ENCODE measurements at regions of chr6 and their contacts with region 1.

Region 1: DNA sequence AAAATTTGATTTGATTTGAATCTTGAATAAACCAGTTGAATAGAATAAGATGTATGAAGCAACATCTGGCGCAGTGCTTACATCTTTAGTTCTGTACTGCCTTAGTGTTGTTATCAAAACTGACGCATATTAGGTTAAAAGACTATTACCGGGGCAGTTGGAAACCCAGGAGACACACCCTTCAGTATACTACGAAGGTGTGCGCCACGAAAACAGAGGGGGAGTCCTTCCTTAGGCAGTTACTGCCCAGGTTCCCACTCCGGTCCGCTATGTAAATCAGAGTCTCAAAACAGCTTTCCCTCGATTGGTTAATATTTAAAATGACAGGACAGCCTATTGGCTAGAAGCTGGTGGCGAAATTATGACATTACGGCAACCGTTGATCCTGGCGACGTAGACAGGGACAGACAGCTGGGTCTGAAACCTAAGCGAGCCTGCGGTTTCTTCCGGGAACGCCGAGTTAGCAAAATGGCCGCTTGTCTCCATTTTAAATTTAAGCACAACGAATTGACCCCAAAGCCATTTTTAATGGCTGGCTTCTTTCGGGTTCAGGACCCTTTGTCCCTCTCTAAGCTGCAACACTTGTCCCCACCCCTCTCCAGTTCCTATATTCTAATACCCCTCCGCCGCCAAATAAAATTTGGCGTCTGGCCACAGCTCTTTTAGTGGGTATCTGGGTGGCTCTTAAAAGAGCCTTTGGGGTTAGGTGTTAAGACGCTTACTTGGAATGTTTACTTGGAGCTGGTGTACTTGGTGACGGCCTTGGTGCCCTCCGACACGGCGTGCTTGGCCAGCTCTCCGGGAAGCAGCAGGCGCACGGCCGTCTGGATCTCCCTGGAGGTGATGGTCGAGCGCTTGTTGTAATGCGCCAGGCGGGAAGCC is 35.8 kb downstream of the HFE start:
- DNase-seq: peak; percentile 93
- H3K4me3 ChIP-seq: peak overlapping the region; percentile 78
- H3K27ac ChIP-seq: peak overlapping the region; percentile 93
- H3K27me3 ChIP-seq: no peaks in the 10 kb centered on the region
- CTCF ChIP-seq: 0 out of 2 replicates have a peak, but pooled peaks have one; percentile 2

Region 2: DNA sequence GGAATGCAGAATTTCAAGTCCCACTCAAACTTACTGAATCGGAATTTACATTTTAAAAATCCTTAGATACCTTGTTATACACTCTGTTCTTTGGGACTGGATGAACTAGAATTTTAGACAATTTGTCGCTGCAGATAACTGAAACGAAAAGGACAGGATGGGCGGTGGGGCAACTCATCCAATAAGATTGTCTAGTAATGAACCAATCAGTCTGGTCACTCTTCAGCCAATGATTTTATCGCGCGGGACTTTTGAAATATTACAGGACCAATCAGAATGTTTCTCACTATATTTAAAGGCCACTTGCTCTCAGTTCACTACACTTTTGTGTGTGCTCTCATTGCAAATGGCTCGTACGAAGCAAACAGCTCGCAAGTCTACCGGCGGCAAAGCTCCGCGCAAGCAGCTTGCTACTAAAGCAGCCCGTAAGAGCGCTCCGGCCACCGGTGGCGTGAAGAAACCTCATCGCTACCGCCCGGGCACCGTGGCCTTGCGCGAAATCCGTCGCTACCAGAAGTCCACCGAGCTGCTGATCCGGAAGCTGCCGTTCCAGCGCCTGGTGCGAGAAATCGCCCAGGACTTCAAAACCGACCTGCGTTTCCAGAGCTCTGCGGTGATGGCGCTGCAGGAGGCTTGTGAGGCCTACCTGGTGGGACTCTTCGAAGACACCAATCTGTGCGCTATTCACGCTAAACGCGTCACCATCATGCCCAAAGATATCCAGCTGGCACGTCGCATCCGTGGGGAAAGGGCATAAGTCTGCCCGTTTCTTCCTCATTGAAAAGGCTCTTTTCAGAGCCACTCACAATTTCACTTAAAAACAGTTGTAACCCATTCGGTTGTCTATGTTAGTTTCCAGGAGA is 77.7 kb before region 1 on chr6:
- CTCF ChIA-PET with region 1: no interaction called
- POLR2A ChIA-PET with region 1: interaction called, 48 read pairs
- DNase-seq: peak; percentile 82
- H3K4me3 ChIP-seq: peak overlapping the region; percentile 66
- H3K27ac ChIP-seq: peak overlapping the region; percentile 63
- H3K27me3 ChIP-seq: no peaks in the 10 kb centered on the region
- CTCF ChIP-seq: peak; percentile 19; the same call in 1 of the 2 replicates

Region 3: DNA sequence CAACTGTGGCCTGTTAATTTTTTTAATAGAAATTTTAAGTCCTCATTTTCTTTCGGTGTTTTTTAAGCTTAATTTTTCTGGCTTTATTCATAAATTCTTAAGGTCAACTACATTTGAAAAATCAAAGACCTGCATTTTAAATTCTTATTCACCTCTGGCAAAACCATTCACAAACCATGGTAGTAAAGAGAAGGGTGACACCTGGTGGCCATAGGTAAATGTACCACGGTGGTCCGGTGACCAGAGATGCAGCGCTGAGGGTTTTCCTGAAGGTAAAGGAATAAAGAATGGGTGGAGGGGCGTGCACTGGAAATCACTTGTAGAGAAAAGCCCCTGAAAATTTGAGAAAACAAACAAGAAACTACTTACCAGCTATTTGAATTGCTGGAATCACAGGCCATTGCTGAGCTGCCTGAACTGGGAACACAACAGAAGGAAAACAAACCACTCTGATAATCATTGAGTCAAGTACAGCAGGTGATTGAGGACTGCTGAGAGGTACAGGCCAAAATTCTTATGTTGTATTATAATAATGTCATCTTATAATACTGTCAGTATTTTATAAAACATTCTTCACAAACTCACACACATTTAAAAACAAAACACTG is 25.7 kb before region 1 on chr6:
- CTCF ChIA-PET with region 1: interaction called, 15 read pairs
- POLR2A ChIA-PET with region 1: interaction called, 101 read pairs
- DNase-seq: no peak
- H3K4me3 ChIP-seq: no peak overlapping the region
- H3K27ac ChIP-seq: no peak overlapping the region
- H3K27me3 ChIP-seq: no peaks in the 10 kb centered on the region
- CTCF ChIP-seq: peak; percentile 69

Region 4: GRCh38 chr6:26172496-26172958 is 49.5 kb after region 1 on chr6:
- CTCF ChIA-PET with region 1: no interaction called
- POLR2A ChIA-PET with region 1: interaction called, 16 read pairs
- DNase-seq: no peak
- H3K4me3 ChIP-seq: peak overlapping the region; percentile 64
- H3K27ac ChIP-seq: peak overlapping the region; percentile 93
- H3K27me3 ChIP-seq: no peaks in the 10 kb centered on the region
- CTCF ChIP-seq: no peak

Region 5: GRCh38 chr6:26216356-26216885 is 93.4 kb after region 1 on chr6:
- CTCF ChIA-PET with region 1: no interaction called
- POLR2A ChIA-PET with region 1: interaction called, 61 read pairs
- DNase-seq: peak; percentile 99
- H3K4me3 ChIP-seq: peak overlapping the region; percentile 80
- H3K27ac ChIP-seq: peak overlapping the region; percentile 99
- H3K27me3 ChIP-seq: no peaks in the 10 kb centered on the region
- CTCF ChIP-seq: no peak

Region 6: DNA sequence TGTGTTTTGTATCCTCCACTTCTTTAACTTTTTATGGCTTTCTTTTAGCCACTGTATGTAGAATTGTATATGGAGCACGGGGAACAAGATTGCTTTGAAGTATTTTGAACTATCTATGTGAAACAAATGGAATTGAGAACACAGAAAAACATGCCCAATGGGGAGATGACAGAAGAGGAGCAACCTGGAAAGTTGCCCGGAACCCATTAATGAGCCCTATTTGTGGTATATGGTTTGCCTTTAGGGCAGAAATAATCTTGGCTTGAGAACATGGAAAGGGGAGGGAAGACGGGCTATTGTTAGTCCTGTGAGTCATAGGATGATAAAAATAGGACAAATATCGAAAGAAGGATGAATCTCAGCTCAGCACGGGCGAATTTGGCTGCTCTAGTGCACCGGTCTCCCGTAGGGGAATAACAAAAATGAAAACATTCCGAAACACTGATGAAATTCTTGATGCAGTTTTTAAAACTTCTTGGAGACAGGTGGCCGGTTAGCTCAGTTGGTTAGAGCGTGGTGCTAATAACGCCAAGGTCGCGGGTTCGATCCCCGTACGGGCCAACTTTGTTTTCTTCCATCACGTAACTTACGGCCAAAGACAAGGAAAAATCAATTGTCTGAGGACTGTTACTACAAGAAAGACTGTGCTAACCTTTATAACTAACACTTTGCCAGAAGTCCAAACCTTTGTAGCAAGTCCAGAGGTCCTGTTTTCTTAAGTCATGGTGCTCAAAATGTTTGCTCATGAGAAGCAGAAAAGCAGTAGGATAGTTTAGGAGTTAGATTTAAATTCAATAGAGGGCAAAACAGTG is 430.8 kb after region 1 on chr6:
- CTCF ChIA-PET with region 1: no interaction called
- POLR2A ChIA-PET with region 1: interaction called, 10 read pairs
- DNase-seq: peak; percentile 81
- H3K4me3 ChIP-seq: peak overlapping the region; percentile 62
- H3K27ac ChIP-seq: peak overlapping the region; percentile 62
- H3K27me3 ChIP-seq: no peaks in the 10 kb centered on the region
- CTCF ChIP-seq: no peak